Panc1 (cell line): ENCODE measurements at regions of chr17 and their contacts with region 1.

Region 1: GRCh38 chr17:48871551-48872351 is 20.8 kb upstream of the ATP5MC1 start:
- DNase-seq: no peak
- ATAC-seq: peak; percentile 60
- H3K4me3 ChIP-seq: no peak overlapping the region
- H3K27ac ChIP-seq: peak overlapping the region; percentile 78
- H3K4me1 ChIP-seq: peaks cover 48% of the 10 kb centered on the region
- H3K27me3 ChIP-seq: no peaks in the 10 kb centered on the region
- CTCF ChIP-seq: no peak

Region 2: GRCh38 chr17:48751172-48751571 is 120.6 kb before region 1 on chr17:
- CTCF ChIA-PET with region 1: interaction called, 3 read pairs
- POLR2A ChIA-PET with region 1: interaction called, 10 read pairs
- in situ Hi-C with region 1: no loop called
- intact Hi-C with region 1: no loop called
- DNase-seq: no peak
- ATAC-seq: peak; percentile 63
- H3K4me3 ChIP-seq: no peak overlapping the region
- H3K27ac ChIP-seq: no peak overlapping the region
- H3K4me1 ChIP-seq: peaks cover 14% of the 10 kb centered on the region
- H3K27me3 ChIP-seq: peaks cover 4% of the 10 kb centered on the region; the same call in 1 of the 2 replicates
- CTCF ChIP-seq: no peak

Region 3: DNA sequence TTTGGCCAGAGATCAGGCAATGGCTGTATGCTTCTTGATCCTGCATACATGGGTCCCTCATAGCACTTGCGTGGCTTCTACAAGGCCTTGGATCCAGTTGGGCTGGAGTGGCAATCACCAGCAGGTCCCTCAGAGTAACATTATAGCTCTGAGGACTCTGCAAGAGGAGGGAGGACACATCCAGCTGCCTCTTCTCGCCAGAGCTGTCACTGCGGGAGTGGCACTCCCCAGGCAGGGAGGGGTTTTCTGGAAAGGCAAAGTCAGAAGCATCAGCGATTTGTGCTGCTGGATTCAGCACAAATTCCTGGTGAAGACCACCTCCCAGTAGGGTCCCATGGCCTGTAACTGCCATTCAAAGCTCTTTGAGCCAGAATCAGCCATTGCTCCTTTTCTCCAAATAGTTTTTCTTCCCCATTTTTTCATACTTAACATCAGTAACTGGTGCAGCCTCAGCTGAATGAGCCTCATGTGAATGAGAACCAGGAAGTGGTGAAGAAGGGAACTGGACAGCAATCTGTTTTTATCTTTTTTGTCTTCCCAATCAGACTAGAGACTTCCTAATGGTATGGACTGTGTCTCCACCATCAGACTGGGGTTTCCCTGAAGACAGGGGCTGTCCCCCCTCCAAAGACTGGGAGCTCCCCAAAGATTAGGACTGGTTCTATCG is 102.6 kb before region 1 on chr17:
- CTCF ChIA-PET with region 1: no interaction called
- POLR2A ChIA-PET with region 1: no interaction called
- in situ Hi-C with region 1: no loop called
- intact Hi-C with region 1: no loop called
- DNase-seq: no peak
- ATAC-seq: no peak
- H3K4me3 ChIP-seq: no peak overlapping the region
- H3K27ac ChIP-seq: no peak overlapping the region
- H3K4me1 ChIP-seq: no peaks in the 10 kb centered on the region
- H3K27me3 ChIP-seq: no peaks in the 10 kb centered on the region
- CTCF ChIP-seq: no peak